Naive thymus-derived CD8-positive, alpha-beta T cell (primary cell): ENCODE measurements at regions of chr2 and their contacts with region 1.

Region 1: DNA sequence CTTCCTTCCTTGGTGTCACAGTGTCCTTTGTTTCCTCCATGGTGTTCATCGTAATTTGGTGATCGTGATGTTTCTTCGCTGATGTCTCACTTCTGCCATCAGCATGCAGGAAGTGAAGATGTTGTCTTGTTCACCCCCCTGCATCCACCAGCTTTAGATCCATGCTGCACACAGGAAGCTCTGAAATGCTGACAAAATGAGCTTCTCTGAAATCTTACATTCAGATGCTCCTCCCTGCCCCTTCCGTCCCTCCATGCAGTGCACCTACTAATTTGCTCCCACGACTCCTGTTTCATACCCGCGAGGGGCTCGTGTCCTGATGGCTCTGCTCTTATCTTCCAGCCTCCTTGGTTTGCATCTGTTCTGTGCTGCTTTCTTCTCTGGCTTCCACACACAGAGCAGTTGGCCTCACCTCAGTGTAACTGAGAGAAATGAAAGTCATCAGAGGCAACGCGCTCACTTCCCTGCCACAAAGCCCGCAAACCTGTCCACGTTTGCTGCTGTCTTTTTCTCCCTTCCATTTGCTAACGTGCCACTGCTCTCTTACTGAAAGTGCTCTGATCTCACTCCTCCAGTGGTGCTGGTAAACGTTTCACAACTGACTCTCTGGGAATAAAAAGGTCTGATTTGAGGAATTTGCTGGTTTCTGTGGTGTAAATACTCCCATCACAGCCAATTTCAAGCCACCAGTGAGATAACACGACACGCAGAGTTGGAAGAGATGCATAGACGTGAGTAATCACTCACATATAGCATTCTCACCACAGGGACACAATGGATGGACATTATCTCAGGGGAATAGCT is 41.0 kb upstream of the MGAT4A start:
- DNase-seq: peak; percentile 32 to 91 (median 78)
- ATAC-seq: peak; percentile 68 to 78
- H3K4me3 Mint-ChIP-seq: peak overlapping the region; percentile 82 to 96 (median 93)
- H3K27ac Mint-ChIP-seq: peak overlapping the region; percentile 96 to 100 (median 98)
- H3K4me1 Mint-ChIP-seq: peaks cover 48 to 86% (median 74%) of the 10 kb centered on the region in 4 donors
- H3K27me3 Mint-ChIP-seq: no peaks in the 10 kb centered on the region

Region 2: GRCh38 chr2:98664327-98664726 is 107.6 kb before region 1 on chr2:
- POLR2A ChIA-PET with region 1: interaction called, 49 read pairs
- DNase-seq: peak in 9 of 10 donors; percentile 28 to 86 (median 71)
- ATAC-seq: peak; percentile 67 to 72
- H3K4me3 Mint-ChIP-seq: peak overlapping the region; percentile 64 to 93 (median 85)
- H3K27ac Mint-ChIP-seq: peak overlapping the region; percentile 91 to 98 (median 96)
- H3K4me1 Mint-ChIP-seq: peaks cover 38 to 82% (median 70%) of the 10 kb centered on the region in 4 donors
- H3K27me3 Mint-ChIP-seq: no peaks in the 10 kb centered on the region

Region 3: GRCh38 chr2:98715812-98716451 is 56.0 kb before region 1 on chr2:
- POLR2A ChIA-PET with region 1: interaction called, 17 read pairs
- DNase-seq: peak in 2 of 10 donors; percentile 35 to 38
- ATAC-seq: peak; percentile 66 to 74
- H3K4me3 Mint-ChIP-seq: peak overlapping the region; percentile 52 to 80 (median 70)
- H3K27ac Mint-ChIP-seq: peak overlapping the region; percentile 85 to 97 (median 91)
- H3K4me1 Mint-ChIP-seq: peaks cover 47 to 90% (median 88%) of the 10 kb centered on the region in 4 donors
- H3K27me3 Mint-ChIP-seq: no peaks in the 10 kb centered on the region

Region 4: GRCh38 chr2:98757904-98758421 is 14.0 kb before region 1 on chr2:
- POLR2A ChIA-PET with region 1: interaction called, 135 read pairs
- DNase-seq: peak; percentile 33 to 80 (median 60)
- ATAC-seq: peak; percentile 82 to 86
- H3K4me3 Mint-ChIP-seq: peak overlapping the region; percentile 70 to 90 (median 84)
- H3K27ac Mint-ChIP-seq: peak overlapping the region; percentile 94 to 99 (median 96)
- H3K4me1 Mint-ChIP-seq: peaks cover 44 to 82% (median 69%) of the 10 kb centered on the region in 4 donors
- H3K27me3 Mint-ChIP-seq: no peaks in the 10 kb centered on the region

Region 5: DNA sequence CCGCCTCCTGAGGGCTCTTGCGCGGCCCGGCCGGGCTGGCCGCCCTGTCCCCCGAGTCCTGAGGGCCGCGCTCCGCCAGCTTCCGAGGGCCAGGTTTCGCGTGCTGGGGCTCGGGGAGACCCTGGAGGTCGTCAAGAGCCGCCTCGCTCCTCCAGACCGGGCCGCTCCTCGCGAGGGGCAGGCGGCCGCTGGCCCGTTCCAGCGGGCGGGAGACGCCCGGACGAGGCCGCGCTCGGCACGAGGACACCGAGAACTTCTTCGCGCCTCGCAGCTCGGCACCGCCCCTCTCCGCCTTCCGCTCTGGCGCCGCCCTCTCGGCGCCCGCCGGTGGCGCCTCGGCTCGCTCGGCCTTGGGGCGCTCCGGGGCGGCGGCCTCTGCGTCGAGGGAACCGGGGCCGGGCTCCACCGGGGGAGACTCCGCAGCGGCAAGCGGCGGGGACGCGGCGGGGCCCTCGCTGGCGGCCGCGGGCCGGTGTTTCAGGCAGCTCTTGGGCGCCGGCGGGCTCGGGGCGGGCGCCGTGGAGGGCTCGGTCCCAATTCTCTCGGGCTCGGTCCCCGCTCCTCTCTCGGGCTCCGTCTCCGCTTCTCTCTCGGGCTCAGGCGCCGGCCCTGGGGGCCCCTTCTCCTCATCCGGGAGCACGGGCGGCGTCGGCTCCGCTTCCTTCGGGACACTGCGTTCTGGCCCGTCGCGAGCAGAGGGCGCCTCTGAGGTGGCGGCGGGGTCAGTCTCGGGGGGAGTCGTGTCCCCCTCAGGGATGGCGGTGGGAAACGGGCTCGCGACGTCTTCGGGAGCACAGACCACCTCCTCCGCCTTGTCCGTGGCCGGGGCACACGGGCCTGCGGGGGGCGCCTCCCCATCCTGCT is 50.6 kb after region 1 on chr2:
- POLR2A ChIA-PET with region 1: interaction called, 53 read pairs
- DNase-seq: peak; percentile 40 to 75 (median 62)
- ATAC-seq: peak; percentile 90 to 94
- H3K4me3 Mint-ChIP-seq: peak overlapping the region in 9 of 10 donors; percentile 9 to 79 (median 36)
- H3K27ac Mint-ChIP-seq: peak overlapping the region in 3 of 10 donors; percentile 31 to 55 (median 43)
- H3K4me1 Mint-ChIP-seq: peaks cover 12 to 39% (median 24%) of the 10 kb centered on the region in 4 donors
- H3K27me3 Mint-ChIP-seq: peaks cover 0 to 5% (median 0%) of the 10 kb centered on the region in 5 donors